MCF 10A (cell line): ENCODE measurements at regions of chr11 and their contacts with region 1.

Region 1: DNA sequence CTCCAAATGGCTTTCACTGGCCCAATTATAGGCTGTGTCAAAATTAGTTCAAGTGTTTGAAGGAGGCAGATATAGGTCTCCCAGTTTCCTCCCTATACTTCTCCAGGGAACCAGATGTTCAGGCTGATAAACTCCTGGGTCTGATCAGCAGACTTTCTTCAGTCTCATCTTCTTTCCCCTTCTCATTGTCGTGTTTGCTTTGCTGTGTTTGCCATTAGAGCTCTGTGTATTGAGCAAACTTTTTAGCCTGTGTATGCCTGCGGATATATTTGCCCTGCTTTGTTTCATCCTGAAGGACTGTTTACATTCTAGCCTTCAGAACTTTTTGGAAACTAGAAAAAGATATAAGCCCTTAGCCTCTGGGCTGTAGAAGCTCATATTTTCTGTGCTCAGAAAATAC is 33.9 kb upstream of the ME3 start:
- DNase-seq: no peak
- H3K4me3 Mint-ChIP-seq: no peak overlapping the region
- H3K27ac Mint-ChIP-seq: no peak overlapping the region
- H3K4me1 Mint-ChIP-seq: peaks cover 9% of the 10 kb centered on the region
- H3K27me3 Mint-ChIP-seq: no peaks in the 10 kb centered on the region
- CTCF ChIP-seq: no peak

Region 2: GRCh38 chr11:86696004-86696403 is 10.3 kb before region 1 on chr11:
- CTCF ChIA-PET with region 1: interaction called, 3 read pairs
- POLR2A ChIA-PET with region 1: interaction called, 15 read pairs
- intact Hi-C with region 1: no loop called
- DNase-seq: peak; percentile 85
- H3K4me3 Mint-ChIP-seq: peak overlapping the region; percentile 10
- H3K27ac Mint-ChIP-seq: peak overlapping the region; percentile 43
- H3K4me1 Mint-ChIP-seq: peaks cover 35% of the 10 kb centered on the region
- H3K27me3 Mint-ChIP-seq: no peaks in the 10 kb centered on the region
- CTCF ChIP-seq: no peak

Region 3: DNA sequence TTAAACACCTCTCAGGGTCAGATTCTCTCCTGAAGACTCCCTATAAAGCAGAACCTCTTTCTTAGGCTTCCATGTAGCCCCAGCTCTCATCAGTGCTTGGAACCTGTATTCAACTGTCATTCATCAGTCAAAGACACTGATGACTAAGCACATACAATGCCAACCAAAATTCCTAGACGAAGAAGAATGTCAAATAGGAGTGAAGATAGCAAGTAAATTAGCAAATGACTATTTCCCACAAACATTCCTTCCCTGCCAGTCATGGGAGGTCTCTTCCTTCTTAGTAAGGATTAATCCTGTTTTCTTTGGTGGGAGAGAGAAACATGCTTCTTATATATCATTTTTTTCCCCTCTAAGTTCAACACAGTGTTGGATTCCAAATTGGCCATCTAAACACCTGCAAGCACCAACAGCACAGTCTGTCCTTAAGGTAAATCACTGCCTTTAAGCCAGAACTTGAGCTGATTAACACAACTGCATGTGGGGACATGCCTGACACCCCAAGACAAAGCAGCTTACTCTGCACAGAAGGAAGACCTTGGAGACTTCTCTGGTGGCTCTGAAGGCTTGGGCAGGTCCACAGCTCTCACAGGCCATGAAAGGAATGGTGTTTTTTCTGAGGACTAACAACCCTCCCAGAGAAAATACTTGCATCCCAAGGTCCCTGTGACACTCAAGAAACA is 13.6 kb after region 1 on chr11:
- CTCF ChIA-PET with region 1: interaction called, 3 read pairs
- POLR2A ChIA-PET with region 1: interaction called, 16 read pairs
- intact Hi-C with region 1: no loop called
- DNase-seq: peak; percentile 84
- H3K4me3 Mint-ChIP-seq: peak overlapping the region; percentile 26
- H3K27ac Mint-ChIP-seq: peak overlapping the region; percentile 76
- H3K4me1 Mint-ChIP-seq: peaks cover 35% of the 10 kb centered on the region
- H3K27me3 Mint-ChIP-seq: no peaks in the 10 kb centered on the region
- CTCF ChIP-seq: no peak